PC-3 (cell line): ENCODE measurements at regions of chr10 and their contacts with region 1.

Region 1: GRCh38 chr10:97025613-97026242 is 160.0 kb downstream of the SLIT1 start:
- DNase-seq: peak; percentile 25
- ATAC-seq: no peak
- H3K4me3 ChIP-seq: no peak overlapping the region
- H3K27ac ChIP-seq: no peak overlapping the region
- H3K4me1 ChIP-seq: peaks cover 35% of the 10 kb centered on the region
- H3K27me3 ChIP-seq: no peaks in the 10 kb centered on the region
- CTCF ChIP-seq: peak; percentile 65

Region 2: DNA sequence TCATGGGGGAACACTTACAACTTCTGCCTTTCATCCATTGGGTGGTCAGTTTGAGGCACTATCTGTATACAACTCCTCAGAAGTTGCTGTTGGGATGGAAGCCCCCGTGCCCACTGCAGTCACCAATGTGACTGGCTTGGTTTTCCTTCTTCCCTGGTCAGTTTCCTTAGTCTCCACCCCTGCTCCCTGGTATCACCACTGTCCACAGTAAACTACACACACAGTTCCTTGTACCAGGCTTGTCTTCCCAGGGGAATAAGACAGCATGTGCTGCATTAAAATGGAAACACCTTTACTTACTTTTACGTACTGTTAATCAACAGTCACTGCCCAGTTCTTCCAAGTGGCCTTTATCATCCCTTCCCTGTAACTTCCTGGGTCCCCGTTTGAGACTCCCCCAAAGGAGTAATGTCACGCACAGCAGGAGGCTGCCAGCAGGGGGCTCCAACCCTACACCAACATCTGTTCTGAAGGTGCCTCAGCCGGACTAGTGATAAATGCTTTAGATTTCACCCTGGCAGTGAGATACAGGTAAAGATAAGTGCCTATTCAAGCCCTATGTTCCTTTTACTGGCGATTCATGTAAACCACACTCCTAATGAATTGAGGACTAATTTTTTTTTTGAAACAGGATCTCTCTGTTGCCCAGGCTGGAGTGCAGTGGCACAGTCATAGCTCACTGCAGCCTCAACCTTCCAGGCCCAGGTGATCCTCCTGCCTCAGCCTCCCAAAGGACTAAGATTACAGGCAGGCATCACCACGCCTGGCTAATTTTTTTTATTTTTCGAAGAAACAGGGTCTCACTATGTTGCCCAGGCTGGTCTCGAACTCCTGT is 260.1 kb before region 1 on chr10:
- CTCF ChIA-PET with region 1: no interaction called
- POLR2A ChIA-PET with region 1: no interaction called
- intact Hi-C with region 1: loop called (anchors 10 kb)
- DNase-seq: peak; percentile 66
- ATAC-seq: peak; percentile 73
- H3K4me3 ChIP-seq: no peak overlapping the region
- H3K27ac ChIP-seq: no peak overlapping the region
- H3K4me1 ChIP-seq: no peaks in the 10 kb centered on the region
- H3K27me3 ChIP-seq: no peaks in the 10 kb centered on the region
- CTCF ChIP-seq: peak; percentile 88

Region 3: GRCh38 chr10:96840841-96841518 is 184.7 kb before region 1 on chr10:
- CTCF ChIA-PET with region 1: no interaction called
- POLR2A ChIA-PET with region 1: no interaction called
- intact Hi-C with region 1: loop called (anchors 5 kb)
- DNase-seq: peak; percentile 82
- ATAC-seq: peak; percentile 84
- H3K4me3 ChIP-seq: peak overlapping the region; percentile 42; the same call in 1 of the 2 replicates
- H3K27ac ChIP-seq: peak overlapping the region; percentile 51
- H3K4me1 ChIP-seq: peaks cover 39% of the 10 kb centered on the region
- H3K27me3 ChIP-seq: no peaks in the 10 kb centered on the region
- CTCF ChIP-seq: no peak

Region 4: GRCh38 chr10:97109547-97109946 is 83.8 kb after region 1 on chr10:
- CTCF ChIA-PET with region 1: no interaction called
- POLR2A ChIA-PET with region 1: no interaction called
- intact Hi-C with region 1: no loop called
- DNase-seq: no peak
- ATAC-seq: no peak
- H3K4me3 ChIP-seq: no peak overlapping the region
- H3K27ac ChIP-seq: no peak overlapping the region
- H3K4me1 ChIP-seq: no peaks in the 10 kb centered on the region
- H3K27me3 ChIP-seq: peaks cover 35% of the 10 kb centered on the region
- CTCF ChIP-seq: no peak

Region 5: DNA sequence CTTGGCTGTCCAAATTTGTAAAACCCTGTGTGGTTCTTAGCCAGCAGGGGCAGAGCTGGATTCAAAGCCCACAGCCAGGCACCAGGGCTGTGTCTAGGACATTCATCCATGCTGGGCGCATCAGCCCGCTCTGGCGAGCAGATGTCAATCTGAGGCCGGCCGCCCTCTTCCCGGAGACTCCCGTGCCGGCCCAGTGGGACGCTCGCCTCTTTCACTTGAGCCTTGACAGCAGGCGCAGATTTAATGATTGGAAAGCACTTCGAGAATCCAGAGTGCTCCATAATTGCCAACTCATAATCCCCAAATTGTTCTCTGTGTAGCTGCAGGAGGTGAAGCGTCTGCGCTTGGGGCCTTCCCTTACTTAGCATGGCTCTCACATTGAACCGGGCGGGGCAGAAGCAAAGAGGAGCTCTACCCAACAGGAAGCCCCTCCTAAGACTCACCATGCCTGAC is 123.4 kb after region 1 on chr10:
- CTCF ChIA-PET with region 1: no interaction called
- POLR2A ChIA-PET with region 1: no interaction called
- intact Hi-C with region 1: no loop called
- DNase-seq: no peak
- ATAC-seq: no peak
- H3K4me3 ChIP-seq: no peak overlapping the region
- H3K27ac ChIP-seq: no peak overlapping the region
- H3K4me1 ChIP-seq: no peaks in the 10 kb centered on the region
- H3K27me3 ChIP-seq: no peaks in the 10 kb centered on the region
- CTCF ChIP-seq: no peak

Region 6: DNA sequence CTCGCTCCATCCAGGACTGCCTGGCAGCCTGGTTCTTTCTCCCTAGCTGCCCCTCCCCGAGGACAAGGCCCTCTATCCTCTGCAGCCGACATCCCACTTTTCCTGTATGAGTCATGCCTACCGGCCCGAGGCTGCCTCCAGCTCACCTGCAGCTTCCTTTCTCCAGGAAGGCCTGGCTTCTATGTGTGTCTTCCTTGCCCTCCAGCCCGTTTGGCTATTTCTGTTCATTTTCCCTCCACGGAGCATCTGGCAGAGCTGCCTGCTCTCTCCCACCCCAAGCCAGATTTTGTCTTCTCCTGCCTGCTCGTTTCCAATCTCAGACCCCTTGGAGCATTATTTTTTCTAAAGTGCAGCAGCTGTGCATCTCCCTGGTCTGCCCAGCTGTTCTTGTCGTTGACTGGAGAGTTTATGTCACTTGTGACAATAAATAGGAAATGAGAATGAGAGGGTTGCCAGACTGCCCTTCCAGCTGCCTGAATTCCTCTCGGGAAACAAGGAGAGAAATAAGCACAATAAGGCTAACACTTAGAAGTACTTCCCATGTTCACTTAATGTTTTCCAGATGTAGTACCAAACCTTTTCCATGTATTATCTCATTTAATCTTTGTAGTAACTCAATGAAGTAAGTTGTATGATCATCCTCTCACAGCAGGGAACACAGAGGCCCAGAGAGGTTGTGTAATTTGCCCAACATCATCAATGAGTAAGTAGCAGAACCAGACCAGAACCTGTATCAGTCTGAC is 492.7 kb after region 1 on chr10:
- CTCF ChIA-PET with region 1: no interaction called
- POLR2A ChIA-PET with region 1: no interaction called
- intact Hi-C with region 1: no loop called
- DNase-seq: peak; percentile 84
- ATAC-seq: peak; percentile 97
- H3K4me3 ChIP-seq: peak overlapping the region; percentile 42; the same call in 1 of the 2 replicates
- H3K27ac ChIP-seq: peak overlapping the region; percentile 61
- H3K4me1 ChIP-seq: peaks cover 26% of the 10 kb centered on the region
- H3K27me3 ChIP-seq: no peaks in the 10 kb centered on the region
- CTCF ChIP-seq: no peak